ENCODE measurements at regions of chr20 and their contacts with region 1.

Region 1: DNA sequence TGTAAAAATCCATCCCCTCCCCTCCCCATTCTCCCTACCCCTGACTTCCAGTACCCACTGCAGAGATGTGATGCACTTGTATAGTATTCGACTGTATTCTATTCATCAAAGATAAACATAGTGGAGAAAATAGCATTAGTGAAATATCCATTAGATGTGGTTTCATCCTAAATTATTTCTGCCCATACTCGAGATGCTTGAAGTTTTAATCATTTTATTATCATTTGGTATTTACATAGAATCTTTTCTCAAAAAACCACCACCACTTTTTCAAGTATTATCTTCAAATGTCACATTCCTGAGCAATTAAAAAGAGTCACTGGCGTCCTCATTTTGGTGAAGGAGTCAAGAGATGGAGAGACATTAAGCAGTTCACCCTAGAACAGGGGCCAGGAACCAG is 181.9 kb downstream of the HAO1 start:
- DNase-seq: no peak

Region 2: GRCh38 chr20:7775072-7775471 is 16.7 kb after region 1 on chr20:
- intact Hi-C with region 1: loop called in 1 of 2 experiments (anchors 1 kb)
- DNase-seq: no peak

Region 3: DNA sequence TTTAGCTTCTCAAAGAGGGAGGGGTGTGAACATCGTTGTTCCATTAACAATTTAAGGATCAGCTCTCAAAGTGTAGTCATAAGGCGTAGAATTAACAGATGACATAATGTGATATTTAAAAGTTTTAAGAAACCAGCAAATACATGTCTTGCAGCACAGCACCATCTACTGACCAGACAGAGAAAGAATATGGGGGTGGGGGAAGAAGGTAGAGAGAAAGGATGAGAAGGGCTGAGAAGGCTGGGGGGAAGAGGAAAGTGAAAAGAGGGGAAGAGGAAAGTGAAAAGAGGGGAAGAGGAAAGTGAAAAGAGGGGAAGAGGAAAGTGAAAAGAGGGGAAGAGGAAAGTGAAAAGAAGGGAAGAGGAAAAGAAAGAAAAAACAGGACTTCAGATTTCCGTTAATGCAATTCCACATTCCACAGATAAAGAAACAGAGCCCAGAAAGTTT is 101.0 kb after region 1 on chr20:
- intact Hi-C with region 1: no loop called
- DNase-seq: no peak

Measured in posterior vena cava (tissue), 2 donors.